Activated CD4-positive, alpha-beta T cell treated with anti-CD3 and anti-CD28 coated beads, Interleukin-2, amount 10 ng/mL, durations not matched to agents 24 days and 14 days (primary cell): ENCODE measurements at regions of chr15 and their contacts with region 1.

Region 1: DNA sequence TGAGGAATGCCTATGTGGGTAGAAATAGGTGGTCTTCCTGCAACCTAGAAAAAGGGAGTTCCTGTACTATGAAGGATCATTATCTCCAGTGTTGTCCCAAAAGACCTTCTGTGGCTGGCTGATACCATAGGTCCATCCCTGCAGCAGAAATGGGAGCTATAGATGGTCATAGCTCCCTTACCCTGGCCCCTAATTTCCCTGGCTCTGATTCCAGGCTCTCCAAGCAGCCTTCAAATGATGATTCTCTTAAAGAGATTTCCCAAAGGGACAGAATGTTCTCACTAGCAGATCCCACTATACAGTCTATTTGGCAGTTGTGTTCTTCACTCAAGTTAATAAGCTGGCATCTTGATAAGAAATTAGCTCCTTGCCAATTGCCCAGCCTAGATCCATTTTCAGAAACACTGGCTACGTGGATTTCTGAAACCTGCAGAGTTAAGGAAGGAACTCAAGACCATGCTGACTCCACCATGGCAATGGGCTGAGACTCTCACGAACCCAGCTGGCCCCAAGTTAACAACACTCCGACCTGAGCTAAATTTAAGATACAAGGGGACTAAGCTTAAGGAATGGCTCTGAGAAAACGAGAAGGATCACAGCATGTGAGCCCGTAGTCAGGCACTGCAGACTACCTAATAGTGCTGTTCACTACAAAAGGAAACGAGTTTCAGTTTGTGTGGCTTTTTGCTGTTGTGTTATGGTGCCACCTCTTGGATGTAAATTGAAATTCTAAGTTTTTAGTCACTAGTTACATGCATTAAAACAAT is 11.4 kb downstream of the C15orf40 start:
- DNase-seq: peak; percentile 84
- H3K4me3 Mint-ChIP-seq: peak overlapping the region; percentile 73
- H3K27ac Mint-ChIP-seq: no peak overlapping the region
- H3K4me1 Mint-ChIP-seq: peaks cover 6% of the 10 kb centered on the region
- H3K27me3 Mint-ChIP-seq: no peaks in the 10 kb centered on the region

Region 2: GRCh38 chr15:82530606-82531379 is 469.3 kb before region 1 on chr15:
- intact Hi-C with region 1: loop called (anchors 5 kb)
- DNase-seq: peak; percentile 90
- H3K4me3 Mint-ChIP-seq: peak overlapping the region; percentile 58
- H3K27ac Mint-ChIP-seq: peak overlapping the region; percentile 50
- H3K4me1 Mint-ChIP-seq: peaks cover 10% of the 10 kb centered on the region
- H3K27me3 Mint-ChIP-seq: peaks cover 9% of the 10 kb centered on the region

Region 3: GRCh38 chr15:82709421-82710207 is 290.5 kb before region 1 on chr15 and contains the start of gene AP3B2:
- intact Hi-C with region 1: loop called (anchors 5 kb)
- DNase-seq: peak; percentile 93
- H3K4me3 Mint-ChIP-seq: peak within 1 kb of the TSS; percentile 65
- H3K27ac Mint-ChIP-seq: no peak within 1 kb of the TSS
- H3K4me1 Mint-ChIP-seq: no peaks in the 10 kb centered on the region
- H3K27me3 Mint-ChIP-seq: peaks cover 6% of the 10 kb centered on the region
- total RNA-seq, gene AP3B2: not detected in 2 replicates

Region 4: GRCh38 chr15:82849556-82850512 is 150.3 kb before region 1 on chr15:
- intact Hi-C with region 1: loop called (anchors 1 kb)
- DNase-seq: peak; percentile 88
- H3K4me3 Mint-ChIP-seq: no peak overlapping the region
- H3K27ac Mint-ChIP-seq: no peak overlapping the region
- H3K4me1 Mint-ChIP-seq: peaks cover 11% of the 10 kb centered on the region
- H3K27me3 Mint-ChIP-seq: peaks cover 9% of the 10 kb centered on the region

Region 5: DNA sequence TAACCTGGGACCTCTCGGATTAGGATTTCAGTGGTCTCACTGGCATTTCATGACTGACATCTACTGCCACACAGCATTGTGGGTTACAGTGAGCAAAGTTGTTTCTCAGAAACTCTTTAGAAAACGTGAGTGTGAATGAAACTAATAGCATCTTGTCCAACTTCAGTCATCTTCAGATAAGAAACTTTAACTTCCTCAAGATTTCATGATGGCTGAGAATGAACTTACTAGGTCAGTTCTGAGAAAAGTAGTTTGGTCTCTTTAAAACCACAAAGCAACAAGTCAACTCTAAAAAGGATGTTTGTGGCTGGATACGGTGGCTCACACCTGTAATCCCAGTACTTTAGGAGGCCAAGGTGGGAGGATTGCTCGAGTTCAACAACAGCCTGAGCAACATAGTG is 33.4 kb before region 1 on chr15:
- intact Hi-C with region 1: no loop called
- DNase-seq: peak; percentile 72
- H3K4me3 Mint-ChIP-seq: no peak overlapping the region
- H3K27ac Mint-ChIP-seq: no peak overlapping the region
- H3K4me1 Mint-ChIP-seq: peaks cover 14% of the 10 kb centered on the region
- H3K27me3 Mint-ChIP-seq: peaks cover 29% of the 10 kb centered on the region